Psoas muscle (tissue), 8 donors: ENCODE measurements at regions of chr17 and their contacts with region 1.

Region 1: GRCh38 chr17:59695945-59696692 is 11.1 kb downstream of the PTRH2 start:
- DNase-seq: no peak
- ATAC-seq: peak in 1 of 4 donors; percentile 11
- H3K4me3 ChIP-seq: no peak overlapping the region
- H3K27ac ChIP-seq: no peak overlapping the region
- H3K4me1 ChIP-seq: no peaks in the 10 kb centered on the region
- H3K27me3 ChIP-seq: no peaks in the 10 kb centered on the region
- CTCF ChIP-seq: no peak

Region 2: GRCh38 chr17:59641799-59642489 is 54.2 kb before region 1 on chr17:
- intact Hi-C with region 1: loop called in 1 of 2 experiments (anchors 10 kb)
- DNase-seq: no peak
- ATAC-seq: no peak
- H3K4me3 ChIP-seq: peak overlapping the region; percentile 8
- H3K27ac ChIP-seq: peak overlapping the region; percentile 66
- H3K4me1 ChIP-seq: peaks cover 48% of the 10 kb centered on the region
- H3K27me3 ChIP-seq: no peaks in the 10 kb centered on the region
- CTCF ChIP-seq: no peak

Region 3: GRCh38 chr17:59651346-59651745 is 44.8 kb before region 1 on chr17:
- intact Hi-C with region 1: loop called (anchors 5 to 10 kb)
- DNase-seq: no peak
- ATAC-seq: no peak
- H3K4me3 ChIP-seq: no peak overlapping the region
- H3K27ac ChIP-seq: no peak overlapping the region
- H3K4me1 ChIP-seq: peaks cover 5% of the 10 kb centered on the region
- H3K27me3 ChIP-seq: no peaks in the 10 kb centered on the region
- CTCF ChIP-seq: no peak

Region 4: GRCh38 chr17:59941131-59941530 is 245.0 kb after region 1 on chr17:
- intact Hi-C with region 1: no loop called
- DNase-seq: no peak
- ATAC-seq: no peak
- H3K4me3 ChIP-seq: no peak overlapping the region
- H3K27ac ChIP-seq: no peak overlapping the region
- H3K4me1 ChIP-seq: no peaks in the 10 kb centered on the region
- H3K27me3 ChIP-seq: no peaks in the 10 kb centered on the region
- CTCF ChIP-seq: no peak